ENCODE measurements at regions of chr16 and their contacts with region 1.

Region 1: DNA sequence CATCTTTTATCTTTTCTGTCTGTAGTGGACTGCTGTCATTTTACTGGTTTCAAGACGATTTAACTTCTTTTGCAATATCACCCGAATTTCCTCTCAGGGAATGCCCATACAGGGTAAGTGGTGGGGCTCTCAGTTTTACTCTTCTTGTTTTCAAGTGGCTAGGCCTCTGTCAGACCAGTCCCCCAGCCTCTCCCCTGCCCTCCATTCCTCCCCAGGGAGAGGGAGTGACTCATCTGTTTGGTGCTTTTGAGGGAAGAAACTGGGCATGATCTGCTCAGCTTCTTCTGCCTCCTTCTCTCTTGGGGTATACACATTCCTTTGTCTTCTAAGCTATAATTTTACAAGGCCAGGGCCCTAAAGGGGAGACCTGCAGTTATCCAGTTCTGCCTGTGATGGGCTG is 332.0 kb downstream of the CBLN1 start:
- DNase-seq: no peak
- ATAC-seq: no peak
- H3K4me3 ChIP-seq: no peak overlapping the region
- H3K27ac ChIP-seq: no peak overlapping the region
- H3K4me1 ChIP-seq: peaks cover 0 to 22% (median 8%) of the 10 kb centered on the region in 9 donors
- H3K27me3 ChIP-seq: no peaks in the 10 kb centered on the region
- CTCF ChIP-seq: no peak

Region 2: DNA sequence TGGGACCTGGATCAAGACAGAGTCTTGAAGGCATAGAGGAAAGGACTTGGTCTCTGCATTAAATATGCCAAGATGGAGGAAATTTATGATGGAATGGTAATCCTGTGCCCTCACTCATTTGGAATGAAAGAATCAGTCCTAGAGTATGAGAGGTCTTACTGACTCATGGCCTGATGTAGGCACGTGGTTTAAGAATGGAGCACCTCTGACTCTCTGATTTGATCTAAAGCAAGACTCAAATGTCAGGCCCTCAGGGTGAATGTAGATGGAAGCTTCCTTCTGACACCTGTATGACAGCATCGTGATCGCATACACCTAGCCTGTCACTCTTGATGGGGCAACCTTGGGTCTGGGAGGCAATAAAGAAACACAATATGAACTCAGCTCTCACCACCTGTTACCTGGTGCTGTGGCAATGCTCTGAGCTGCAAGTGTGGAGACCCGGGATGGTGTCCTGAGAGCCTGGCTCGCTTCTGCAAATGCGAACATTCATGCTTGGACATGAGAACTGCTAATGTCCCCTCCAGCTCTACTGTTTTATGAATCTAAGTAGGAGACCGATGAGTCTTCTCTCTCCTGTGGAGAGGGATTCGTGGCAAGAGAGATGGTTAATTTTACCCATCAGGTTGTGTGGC is 1023.7 kb before region 1 on chr16:
- intact Hi-C with region 1: no loop called
- DNase-seq: no peak
- ATAC-seq: no peak
- H3K4me3 ChIP-seq: no peak overlapping the region
- H3K27ac ChIP-seq: no peak overlapping the region
- H3K4me1 ChIP-seq: no peaks in the 10 kb centered on the region
- H3K27me3 ChIP-seq: no peaks in the 10 kb centered on the region
- CTCF ChIP-seq: no peak

Region 3: GRCh38 chr16:48932216-48932855 is 17.3 kb before region 1 on chr16:
- intact Hi-C with region 1: no loop called
- DNase-seq: no peak
- ATAC-seq: peak in 1 of 8 donors; percentile 42
- H3K4me3 ChIP-seq: no peak overlapping the region
- H3K27ac ChIP-seq: no peak overlapping the region
- H3K4me1 ChIP-seq: no peaks in the 10 kb centered on the region
- H3K27me3 ChIP-seq: peaks cover 0 to 3% (median 0%) of the 10 kb centered on the region in 7 donors
- CTCF ChIP-seq: no peak

Region 4: DNA sequence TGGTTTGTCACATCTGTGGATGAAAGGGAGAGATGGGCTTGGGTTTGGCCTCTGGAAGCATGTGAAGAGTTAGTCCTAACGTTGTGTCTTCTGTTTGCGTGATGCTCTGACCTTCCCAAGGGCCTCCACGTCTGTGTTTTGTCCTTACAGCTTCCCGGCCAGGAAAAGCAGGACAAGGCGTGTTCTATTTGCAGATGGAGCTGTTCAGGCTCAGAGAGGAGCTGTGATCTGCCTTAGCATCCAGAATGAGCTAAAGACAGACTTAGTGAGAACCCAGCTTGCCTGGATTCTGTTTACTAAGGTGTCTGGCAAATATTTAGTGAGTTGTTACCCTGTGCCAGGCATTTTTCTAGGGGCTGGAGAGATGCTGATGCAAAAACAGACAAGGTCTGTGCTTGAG is 49.9 kb after region 1 on chr16:
- intact Hi-C with region 1: loop called in 1 of 10 experiments (anchors 1 kb)
- DNase-seq: no peak
- ATAC-seq: peak in 1 of 8 donors; percentile 28
- H3K4me3 ChIP-seq: no peak overlapping the region
- H3K27ac ChIP-seq: no peak overlapping the region
- H3K4me1 ChIP-seq: peaks cover 0 to 11% (median 0%) of the 10 kb centered on the region in 9 donors
- H3K27me3 ChIP-seq: peaks cover 0 to 7% (median 0%) of the 10 kb centered on the region in 7 donors
- CTCF ChIP-seq: no peak

Region 5: GRCh38 chr16:49112754-49113153 is 163.1 kb after region 1 on chr16:
- intact Hi-C with region 1: loop called in 1 of 10 experiments (anchors 2 kb)
- DNase-seq: peak; percentile 50 to 59
- ATAC-seq: peak; percentile 43 to 97 (median 96)
- H3K4me3 ChIP-seq: no peak overlapping the region
- H3K27ac ChIP-seq: peak overlapping the region in 4 of 10 donors; percentile 46 to 70 (median 54)
- H3K4me1 ChIP-seq: peaks cover 0 to 23% (median 11%) of the 10 kb centered on the region in 9 donors
- H3K27me3 ChIP-seq: no peaks in the 10 kb centered on the region
- CTCF ChIP-seq: no peak